Activated CD8-positive, alpha-beta memory T cell treated with anti-CD3 and anti-CD28 coated beads, Interleukin-2, amount 10 ng/mL, durations not matched to agents 7 days and 5 days (primary cell): ENCODE measurements at regions of chr11 and their contacts with region 1.

Region 1: GRCh38 chr11:20127671-20128527 is 32.4 kb downstream of the DBX1 start:
- DNase-seq: peak; percentile 80
- ATAC-seq: peak; percentile 84
- H3K4me3 Mint-ChIP-seq: no peak overlapping the region
- H3K27ac Mint-ChIP-seq: no peak overlapping the region
- H3K4me1 Mint-ChIP-seq: peaks cover 11% of the 10 kb centered on the region
- H3K27me3 Mint-ChIP-seq: peaks cover 27% of the 10 kb centered on the region

Region 2: GRCh38 chr11:19814421-19814820 is 313.5 kb before region 1 on chr11:
- CTCF ChIA-PET with region 1: no interaction called
- DNase-seq: no peak
- ATAC-seq: no peak
- H3K4me3 Mint-ChIP-seq: no peak overlapping the region
- H3K27ac Mint-ChIP-seq: no peak overlapping the region
- H3K4me1 Mint-ChIP-seq: no peaks in the 10 kb centered on the region
- H3K27me3 Mint-ChIP-seq: no peaks in the 10 kb centered on the region

Region 3: GRCh38 chr11:19890308-19890707 is 237.6 kb before region 1 on chr11:
- CTCF ChIA-PET with region 1: no interaction called
- DNase-seq: no peak
- ATAC-seq: no peak
- H3K4me3 Mint-ChIP-seq: no peak overlapping the region
- H3K27ac Mint-ChIP-seq: no peak overlapping the region
- H3K4me1 Mint-ChIP-seq: no peaks in the 10 kb centered on the region
- H3K27me3 Mint-ChIP-seq: peaks cover 2% of the 10 kb centered on the region

Region 4: DNA sequence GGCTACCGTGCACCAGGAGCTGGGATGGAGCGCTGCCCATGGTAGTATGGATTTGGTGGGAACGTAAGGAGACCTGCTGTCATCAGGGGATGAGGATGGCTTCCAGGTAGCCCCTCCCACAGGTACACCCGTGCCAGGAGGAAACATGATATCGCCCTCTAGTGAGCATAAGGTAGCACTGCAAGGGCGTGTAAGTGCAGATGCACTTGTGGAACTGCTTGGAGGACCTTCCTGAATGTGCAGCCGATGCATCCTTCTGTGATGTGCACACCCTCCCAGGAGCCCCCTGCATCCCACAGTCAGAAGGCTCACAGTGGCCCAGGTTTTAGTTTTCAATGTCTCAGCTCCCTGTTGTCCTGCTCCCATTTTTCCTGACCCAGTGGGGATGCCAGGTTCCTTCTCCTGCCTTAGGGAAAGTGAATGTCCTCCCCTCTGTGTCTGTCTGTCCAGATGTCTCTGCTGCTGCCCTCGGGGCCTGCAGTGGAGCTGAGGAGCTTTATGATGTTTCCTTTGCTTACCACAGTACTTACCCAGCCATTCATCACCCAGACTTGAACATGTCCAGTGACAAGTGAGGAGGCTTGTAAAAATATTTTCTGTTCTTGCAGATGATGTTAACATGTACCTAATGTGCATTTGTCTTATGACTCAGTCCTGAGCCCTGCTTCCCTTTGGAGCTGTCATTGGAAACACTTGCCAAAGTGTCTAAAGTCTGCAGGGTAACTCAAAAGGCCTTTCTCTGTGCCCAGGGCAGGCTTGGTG is 16.8 kb before region 1 on chr11:
- CTCF ChIA-PET with region 1: interaction called, 11 read pairs
- DNase-seq: peak; percentile 65
- ATAC-seq: peak; percentile 70
- H3K4me3 Mint-ChIP-seq: no peak overlapping the region
- H3K27ac Mint-ChIP-seq: no peak overlapping the region
- H3K4me1 Mint-ChIP-seq: no peaks in the 10 kb centered on the region
- H3K27me3 Mint-ChIP-seq: no peaks in the 10 kb centered on the region

Region 5: DNA sequence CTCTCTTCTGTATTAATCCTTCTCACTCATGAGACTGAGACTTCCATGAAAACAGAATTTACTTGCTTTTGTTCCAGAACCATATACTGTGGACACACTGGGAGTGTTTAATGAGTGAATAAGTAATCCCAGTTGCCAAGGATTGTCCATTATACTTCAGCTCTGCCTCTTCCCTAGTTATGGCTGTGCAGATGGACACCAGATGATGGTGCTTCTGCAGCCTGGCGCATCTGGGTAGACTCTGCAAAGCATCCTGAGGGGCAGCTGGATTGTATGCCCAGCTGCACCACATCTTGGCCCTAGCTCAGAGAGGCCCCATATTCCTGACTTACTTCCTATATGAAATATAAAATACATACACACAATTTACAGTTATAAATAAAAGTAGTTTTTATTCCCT is 11.1 kb before region 1 on chr11:
- CTCF ChIA-PET with region 1: interaction called, 11 read pairs
- DNase-seq: no peak
- ATAC-seq: no peak
- H3K4me3 Mint-ChIP-seq: no peak overlapping the region
- H3K27ac Mint-ChIP-seq: no peak overlapping the region
- H3K4me1 Mint-ChIP-seq: no peaks in the 10 kb centered on the region
- H3K27me3 Mint-ChIP-seq: peaks cover 19% of the 10 kb centered on the region

Region 6: DNA sequence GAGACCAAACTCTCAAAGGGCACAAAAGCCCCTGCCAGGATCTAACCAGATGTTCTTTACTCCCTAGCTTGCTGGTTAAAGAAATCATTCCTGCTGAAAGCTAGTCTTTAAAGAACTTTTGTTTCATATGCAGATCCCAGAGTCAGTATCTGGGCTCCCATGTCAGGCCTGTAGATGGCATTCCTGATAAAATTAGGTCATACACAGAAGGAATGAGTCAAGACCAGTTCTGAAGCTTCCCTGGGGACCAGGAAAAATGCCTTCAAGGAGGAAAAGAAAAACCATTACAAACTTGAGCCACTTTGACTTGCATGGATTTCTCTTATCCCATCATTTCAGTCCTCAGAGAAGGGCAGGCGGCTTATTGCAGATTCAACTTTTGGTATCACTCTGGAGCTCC is 26.5 kb after region 1 on chr11:
- CTCF ChIA-PET with region 1: interaction called, 11 read pairs
- DNase-seq: no peak
- ATAC-seq: no peak
- H3K4me3 Mint-ChIP-seq: no peak overlapping the region
- H3K27ac Mint-ChIP-seq: no peak overlapping the region
- H3K4me1 Mint-ChIP-seq: peaks cover 7% of the 10 kb centered on the region
- H3K27me3 Mint-ChIP-seq: peaks cover 59% of the 10 kb centered on the region

Region 7: GRCh38 chr11:20226933-20227332 is 99.0 kb after region 1 on chr11:
- CTCF ChIA-PET with region 1: no interaction called
- DNase-seq: no peak
- ATAC-seq: no peak
- H3K4me3 Mint-ChIP-seq: no peak overlapping the region
- H3K27ac Mint-ChIP-seq: no peak overlapping the region
- H3K4me1 Mint-ChIP-seq: no peaks in the 10 kb centered on the region
- H3K27me3 Mint-ChIP-seq: peaks cover 10% of the 10 kb centered on the region

Region 8: GRCh38 chr11:20355221-20356219 is 227.6 kb after region 1 on chr11:
- CTCF ChIA-PET with region 1: interaction called, 81 read pairs
- DNase-seq: peak; percentile 64
- ATAC-seq: peak; percentile 87
- H3K4me3 Mint-ChIP-seq: no peak overlapping the region
- H3K27ac Mint-ChIP-seq: no peak overlapping the region
- H3K4me1 Mint-ChIP-seq: peaks cover 6% of the 10 kb centered on the region
- H3K27me3 Mint-ChIP-seq: peaks cover 11% of the 10 kb centered on the region

Region 9: DNA sequence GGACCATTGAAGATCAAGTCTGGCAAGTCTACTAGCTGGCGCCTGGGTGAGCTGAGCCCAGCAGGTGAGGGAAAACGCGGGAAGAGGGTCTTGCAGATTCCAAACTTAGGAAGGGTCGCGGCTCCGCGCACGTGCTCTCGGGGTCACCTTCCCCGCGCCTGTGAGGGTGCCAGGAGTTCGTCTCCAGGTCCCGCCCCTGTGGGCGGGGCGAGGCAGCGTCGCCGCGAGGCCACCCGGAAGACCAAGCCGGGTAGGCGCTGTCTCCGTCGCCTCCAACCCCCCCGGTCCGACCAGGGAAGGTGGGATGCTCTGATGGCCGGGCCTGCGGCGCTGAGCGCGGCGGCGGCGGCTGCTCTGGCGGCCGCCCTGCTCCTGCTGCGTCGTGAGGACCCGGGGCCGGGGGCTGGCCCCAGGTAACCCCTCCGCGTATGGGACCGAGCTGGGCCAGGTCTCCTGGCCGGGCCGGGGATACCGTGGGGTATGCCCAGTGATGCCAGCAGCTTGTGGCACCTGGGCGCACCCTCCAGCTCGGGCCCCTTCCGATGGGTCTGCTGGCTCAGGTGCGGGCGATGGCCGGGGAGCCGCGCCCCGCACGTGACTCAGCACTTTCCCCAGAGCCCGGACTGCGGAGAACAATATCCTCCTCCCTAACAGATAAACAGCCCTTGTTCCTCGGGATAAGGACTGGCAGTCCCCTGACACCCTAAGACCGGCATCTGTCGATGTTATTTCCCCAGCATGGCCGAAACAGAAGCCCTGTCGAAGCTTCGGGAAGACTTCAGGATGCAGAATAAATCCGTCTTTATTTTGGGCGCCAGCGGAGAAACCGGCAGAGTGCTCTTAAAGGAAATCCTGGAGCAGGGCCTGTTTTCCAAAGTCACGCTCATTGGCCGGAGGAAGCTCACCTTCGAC is 235.9 kb after region 1 on chr11 and contains the start of gene HTATIP2:
- CTCF ChIA-PET with region 1: interaction called, 22 read pairs
- DNase-seq: peak; percentile 81
- ATAC-seq: peak; percentile 94
- H3K4me3 Mint-ChIP-seq: peak within 1 kb of the TSS; percentile 81
- H3K27ac Mint-ChIP-seq: peak within 1 kb of the TSS; percentile 85
- H3K4me1 Mint-ChIP-seq: peaks cover 60% of the 10 kb centered on the region
- H3K27me3 Mint-ChIP-seq: no peaks in the 10 kb centered on the region
- total RNA-seq, gene HTATIP2: 42.0 to 44.2 TPM